Caki2 (cell line): ENCODE measurements at regions of chr4 and their contacts with region 1.

Region 1: GRCh38 chr4:82428969-82429727 is 1.1 kb downstream of the HNRNPDL start:
- DNase-seq: peak; percentile 93

Region 2: GRCh38 chr4:82373816-82374625 is 55.1 kb before region 1 on chr4 and contains the start of gene HNRNPD:
- in situ Hi-C with region 1: loop called (anchors 10 kb)
- DNase-seq: peak; percentile 99
- total RNA-seq, gene HNRNPD: 24.0 and 42.8 TPM in 2 replicates